Mammary epithelial cell (primary cell): ENCODE measurements at regions of chr9 and their contacts with region 1.

Region 1: DNA sequence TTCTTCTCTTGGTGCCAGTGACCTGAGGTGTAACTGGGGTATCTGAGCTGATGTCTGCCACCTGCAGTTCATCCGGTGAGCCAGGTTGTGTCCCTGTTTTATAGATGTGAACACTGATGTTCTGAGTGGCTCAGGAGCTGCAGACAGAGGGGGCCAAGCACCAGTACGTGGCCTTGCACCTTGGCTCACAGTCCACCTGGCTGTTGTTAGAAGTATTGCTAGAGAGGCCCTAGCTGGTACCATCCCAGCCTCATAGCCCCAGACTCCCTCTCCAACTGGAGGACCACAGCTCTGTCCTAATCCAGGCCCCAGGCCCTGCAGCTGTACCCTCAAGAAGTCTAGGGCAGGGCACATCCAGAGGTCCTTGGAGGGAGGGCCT is 16.2 kb downstream of the PHF2 start:
- DNase-seq: no peak
- H3K4me3 ChIP-seq: no peak overlapping the region
- H3K27ac ChIP-seq: no peak overlapping the region
- H3K4me1 ChIP-seq: peaks cover 9% of the 10 kb centered on the region
- H3K27me3 ChIP-seq: no peaks in the 10 kb centered on the region
- CTCF ChIP-seq: peak in 1 of 2 donors; percentile 35

Region 2: GRCh38 chr9:93620878-93621820 is 28.5 kb after region 1 on chr9:
- CTCF ChIA-PET with region 1: no interaction called
- dilution Hi-C with region 1: loop called (anchors 5 kb)
- in situ Hi-C with region 1: no loop called
- intact Hi-C with region 1: no loop called
- DNase-seq: no peak
- H3K4me3 ChIP-seq: no peak overlapping the region
- H3K27ac ChIP-seq: no peak overlapping the region
- H3K4me1 ChIP-seq: no peaks in the 10 kb centered on the region
- H3K27me3 ChIP-seq: no peaks in the 10 kb centered on the region
- CTCF ChIP-seq: no peak